ENCODE measurements at regions of chr6 and their contacts with region 1.

Region 1: GRCh38 chr6:167141667-167142432 is 15.9 kb downstream of the GPR31 start:
- DNase-seq: peak in 41 of 42 donors; percentile 22 to 82 (median 58)

Region 2: GRCh38 chr6:166999145-166999883 is 142.5 kb before region 1 on chr6 and contains the start of gene CEP43:
- intact Hi-C with region 1: loop called (anchors 10 kb)
- DNase-seq: peak; percentile 78 to 96 (median 94)